ENCODE measurements at regions of chr17 and their contacts with region 1.

Region 1: GRCh38 chr17:43946069-43946696 is 3.9 kb upstream of the PPY start:
- DNase-seq: peak in 1 of 4 donors; percentile 39
- ATAC-seq: no peak
- H3K4me3 ChIP-seq: no peak overlapping the region
- H3K27ac ChIP-seq: no peak overlapping the region
- H3K4me1 ChIP-seq: peaks cover 0 to 6% of the 10 kb centered on the region in 2 donors
- H3K27me3 ChIP-seq: peaks cover 5 to 35% of the 10 kb centered on the region in 2 donors
- CTCF ChIP-seq: no peak

Region 2: GRCh38 chr17:43994272-43995149 is 48.3 kb after region 1 on chr17:
- intact Hi-C with region 1: loop called in 1 of 2 experiments (anchors 5 kb)
- DNase-seq: peak in 2 of 4 donors; percentile 49 to 89
- ATAC-seq: peak; percentile 84
- H3K4me3 ChIP-seq: peak overlapping the region; percentile 7 to 10
- H3K27ac ChIP-seq: no peak overlapping the region
- H3K4me1 ChIP-seq: no peaks in the 10 kb centered on the region
- H3K27me3 ChIP-seq: peaks cover 0 to 16% of the 10 kb centered on the region in 2 donors
- CTCF ChIP-seq: peak; percentile 70 to 76